Left ventricle myocardium superior (tissue), 1 donor: ENCODE measurements at regions of chr6 and their contacts with region 1.

Region 1: DNA sequence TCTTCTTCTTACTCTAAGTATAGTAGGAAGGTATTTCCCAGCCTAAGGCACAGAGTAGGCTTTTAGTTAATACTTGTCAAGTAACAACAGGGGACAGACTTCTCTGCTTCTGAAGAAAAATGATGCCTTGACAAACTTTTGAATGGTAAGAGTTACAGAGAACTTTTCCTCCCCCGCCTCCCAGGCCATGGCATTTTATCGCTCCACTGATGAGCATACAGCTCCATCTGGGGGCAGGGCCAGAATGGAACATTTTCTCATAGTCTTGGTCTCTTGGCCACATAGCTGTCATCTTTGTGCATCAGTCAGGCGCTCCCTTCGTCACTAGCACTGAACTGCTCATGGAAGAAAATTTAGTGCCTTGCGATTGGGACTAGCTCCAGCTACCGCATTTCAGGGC is 1066.8 kb upstream of the CITED2 start:
- DNase-seq: peak; percentile 64
- ATAC-seq: peak; percentile 95

Region 2: GRCh38 chr6:139753198-139753861 is 687.9 kb before region 1 on chr6:
- intact Hi-C with region 1: no loop called
- DNase-seq: no peak
- ATAC-seq: no peak

Region 3: DNA sequence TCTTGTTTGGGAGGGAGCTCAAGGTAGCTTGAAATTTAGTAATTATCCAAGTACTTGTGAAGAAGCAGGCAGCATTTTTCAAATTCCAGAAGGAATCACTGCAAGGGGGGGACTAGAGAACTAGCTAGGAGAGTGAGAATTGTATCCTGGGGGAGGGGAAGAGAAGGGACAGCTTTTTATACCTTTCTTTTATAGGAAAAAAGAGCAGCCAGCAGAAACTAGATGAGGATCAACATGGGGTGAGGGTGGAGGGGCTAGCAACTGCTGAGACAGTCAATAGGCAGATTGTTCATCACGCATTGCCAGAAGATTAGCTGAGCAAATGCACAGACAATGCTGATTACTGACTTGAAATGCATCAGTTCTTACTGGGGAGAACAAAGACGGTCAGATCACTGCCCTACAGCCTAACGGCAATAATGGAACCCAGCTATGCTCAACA is 552.6 kb before region 1 on chr6:
- intact Hi-C with region 1: loop called (anchors 5 kb)
- DNase-seq: no peak
- ATAC-seq: no peak

Region 4: GRCh38 chr6:140871911-140872310 is 430.7 kb after region 1 on chr6:
- intact Hi-C with region 1: no loop called
- DNase-seq: no peak
- ATAC-seq: no peak